Left lung (tissue), 14 donors: ENCODE measurements at regions of chr5 and their contacts with region 1.

Region 1: GRCh38 chr5:174317259-174317894 is 271.9 kb downstream of the NSG2 start:
- DNase-seq: peak in 2 of 4 donors; percentile 35 to 63
- ATAC-seq: peak; percentile 83
- H3K4me3 ChIP-seq: no peak overlapping the region
- H3K27ac ChIP-seq: no peak overlapping the region
- H3K4me1 ChIP-seq: no peaks in the 10 kb centered on the region
- H3K27me3 ChIP-seq: peaks cover 0 to 64% of the 10 kb centered on the region in 2 donors
- CTCF ChIP-seq: peak; percentile 47 to 53

Region 2: GRCh38 chr5:173745123-173745522 is 572.3 kb before region 1 on chr5:
- intact Hi-C with region 1: no loop called
- DNase-seq: no peak
- ATAC-seq: peak; percentile 53
- H3K4me3 ChIP-seq: no peak overlapping the region
- H3K27ac ChIP-seq: no peak overlapping the region
- H3K4me1 ChIP-seq: peaks cover 0 to 15% of the 10 kb centered on the region in 2 donors
- H3K27me3 ChIP-seq: no peaks in the 10 kb centered on the region
- CTCF ChIP-seq: no peak

Region 3: GRCh38 chr5:174044466-174045254 is 272.7 kb before region 1 on chr5:
- intact Hi-C with region 1: loop called in 1 of 2 experiments (anchors 5 kb)
- DNase-seq: no peak
- ATAC-seq: no peak
- H3K4me3 ChIP-seq: no peak overlapping the region
- H3K27ac ChIP-seq: no peak overlapping the region
- H3K4me1 ChIP-seq: no peaks in the 10 kb centered on the region
- H3K27me3 ChIP-seq: peaks cover 0 to 31% of the 10 kb centered on the region in 2 donors
- CTCF ChIP-seq: no peak

Region 4: GRCh38 chr5:174520420-174521380 is 203.3 kb after region 1 on chr5:
- intact Hi-C with region 1: no loop called
- DNase-seq: peak in 1 of 4 donors; percentile 17
- ATAC-seq: no peak
- H3K4me3 ChIP-seq: no peak overlapping the region
- H3K27ac ChIP-seq: no peak overlapping the region
- H3K4me1 ChIP-seq: no peaks in the 10 kb centered on the region
- H3K27me3 ChIP-seq: peaks cover 0 to 63% of the 10 kb centered on the region in 2 donors
- CTCF ChIP-seq: no peak